ENCODE measurements at regions of chr15 and their contacts with region 1.

Region 1: DNA sequence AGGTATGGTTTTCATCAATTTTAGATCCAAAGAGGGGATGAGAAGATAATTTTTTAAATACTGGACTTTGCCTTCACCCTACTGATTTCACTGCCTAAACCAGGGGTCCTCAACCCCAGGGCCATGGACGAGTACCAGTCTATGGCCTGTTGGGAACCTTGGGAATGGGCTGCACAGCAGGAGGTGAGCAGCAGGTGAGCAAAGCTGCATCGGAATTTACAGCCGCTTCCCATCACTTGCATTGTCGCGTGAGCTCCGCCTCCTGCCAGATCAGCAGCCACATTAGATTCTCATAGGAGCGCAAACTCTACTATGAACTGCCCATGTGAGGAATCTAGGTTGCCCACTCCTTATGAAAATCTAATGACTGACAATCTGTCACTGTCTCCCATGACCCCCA is 76.3 kb upstream of the TTBK2 start:
- DNase-seq: no peak
- ATAC-seq: no peak
- H3K4me3 Mint-ChIP-seq: no peak overlapping the region
- H3K27ac Mint-ChIP-seq: no peak overlapping the region
- H3K4me1 Mint-ChIP-seq: no peaks in the 10 kb centered on the region
- H3K27me3 Mint-ChIP-seq: no peaks in the 10 kb centered on the region
- CTCF ChIP-seq: no peak

Region 2: DNA sequence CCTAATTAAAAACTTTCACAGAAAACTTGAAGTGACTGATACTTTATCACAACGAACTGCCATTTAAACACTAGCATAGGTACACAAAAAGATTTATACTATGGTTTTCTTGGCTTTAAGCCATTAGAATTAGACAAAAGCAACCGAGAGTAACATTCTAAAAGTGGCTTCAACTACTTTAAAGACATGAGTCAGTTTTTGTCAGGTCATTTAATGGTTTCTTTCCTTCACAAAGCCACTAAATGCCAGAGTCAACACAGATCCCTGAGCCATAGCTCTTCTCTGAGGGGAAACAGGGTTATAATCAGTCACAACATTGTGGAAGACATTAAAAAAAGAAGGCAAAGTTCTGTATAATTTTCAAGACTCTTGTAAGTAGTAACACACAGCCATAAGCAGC is 583.0 kb before region 1 on chr15:
- CTCF ChIA-PET with region 1: no interaction called
- POLR2A ChIA-PET with region 1: no interaction called
- intact Hi-C with region 1: no loop called
- DNase-seq: no peak
- ATAC-seq: no peak
- H3K4me3 Mint-ChIP-seq: no peak overlapping the region
- H3K27ac Mint-ChIP-seq: no peak overlapping the region
- H3K4me1 Mint-ChIP-seq: no peaks in the 10 kb centered on the region
- H3K27me3 Mint-ChIP-seq: no peaks in the 10 kb centered on the region
- CTCF ChIP-seq: no peak

Region 3: DNA sequence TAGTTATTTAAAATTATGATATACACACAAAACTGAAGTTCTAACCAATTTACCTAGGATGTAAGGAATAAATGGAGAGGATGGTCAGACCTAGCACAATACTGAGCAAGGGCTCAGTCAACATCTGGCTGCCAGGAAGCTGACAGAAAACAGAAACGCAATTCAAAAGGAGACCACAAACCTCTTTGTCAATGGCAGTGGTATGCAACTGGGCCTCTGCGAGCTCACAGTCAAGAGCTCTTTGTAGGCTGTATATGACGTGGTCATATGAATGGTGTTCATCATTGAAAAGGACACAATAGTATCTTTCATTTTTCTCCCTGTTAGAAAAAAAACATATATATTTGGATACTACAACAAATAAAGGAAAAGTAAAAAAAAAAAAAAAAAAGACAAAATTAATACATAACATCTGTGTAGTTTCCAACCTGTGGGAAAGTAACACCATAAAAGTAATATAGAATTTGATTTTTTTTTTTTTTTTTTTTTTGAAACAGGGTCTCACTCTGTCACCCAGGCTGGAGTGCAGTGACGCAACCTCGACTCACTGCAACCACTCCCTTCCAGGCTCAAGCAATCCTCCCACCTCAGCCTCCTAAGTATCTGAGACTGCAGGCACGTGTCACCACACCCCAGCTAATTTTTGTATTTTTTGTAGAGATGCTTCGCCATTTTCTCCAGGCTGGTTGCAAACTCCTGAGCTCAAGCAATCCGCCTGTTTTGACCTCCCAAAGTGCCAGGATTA is 71.0 kb after region 1 on chr15:
- CTCF ChIA-PET with region 1: no interaction called
- POLR2A ChIA-PET with region 1: interaction called, 17 read pairs
- intact Hi-C with region 1: no loop called
- DNase-seq: no peak
- ATAC-seq: no peak
- H3K4me3 Mint-ChIP-seq: no peak overlapping the region
- H3K27ac Mint-ChIP-seq: no peak overlapping the region
- H3K4me1 Mint-ChIP-seq: no peaks in the 10 kb centered on the region
- H3K27me3 Mint-ChIP-seq: no peaks in the 10 kb centered on the region
- CTCF ChIP-seq: no peak

Measured in activated B cell treated with CpG ODN at 0.5 μM for 24 hours (primary cell).